CD4-positive, alpha-beta memory T cell (primary cell): ENCODE measurements at regions of chr15 and their contacts with region 1.

Region 1: DNA sequence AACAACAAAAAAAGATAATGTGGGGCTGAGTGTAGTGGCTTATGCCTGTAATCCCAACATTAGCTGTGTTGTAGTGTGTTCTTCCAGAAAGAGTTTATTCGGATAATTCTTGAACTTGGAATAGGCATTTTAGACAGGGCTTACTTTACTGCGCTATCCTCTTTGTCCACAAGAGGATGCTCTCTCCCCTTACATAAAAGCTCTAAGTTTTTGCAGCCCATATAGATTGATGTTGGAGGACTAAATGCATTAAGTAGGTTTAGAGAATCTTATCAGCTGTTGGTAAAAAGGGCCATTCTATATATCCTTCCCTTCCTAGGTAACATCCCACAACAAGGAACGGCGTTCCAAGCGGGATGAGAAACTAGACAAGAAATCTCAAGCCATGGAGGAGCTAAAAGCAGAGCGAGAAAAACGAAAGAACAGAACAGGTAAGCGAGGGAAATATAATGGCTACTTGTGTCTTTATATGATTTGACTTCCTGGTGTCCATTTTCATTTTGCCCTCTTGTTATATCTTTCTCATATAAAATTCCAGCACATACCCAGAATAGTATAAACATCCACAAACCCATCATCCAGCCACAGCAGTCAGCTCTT is 27.8 kb upstream of the ITPKA start:
- DNase-seq: peak in 4 of 5 donors; percentile 37 to 56 (median 44)
- H3K4me3 ChIP-seq: no peak overlapping the region
- H3K4me3 Mint-ChIP-seq: no peak overlapping the region
- H3K27ac ChIP-seq: no peak overlapping the region
- H3K27ac Mint-ChIP-seq: peak overlapping the region in 3 of 7 donors; percentile 24 to 89 (median 49)
- H3K4me1 ChIP-seq: no peaks in the 10 kb centered on the region
- H3K4me1 Mint-ChIP-seq: peaks cover 0 to 7% (median 4%) of the 10 kb centered on the region in 4 donors
- H3K27me3 ChIP-seq: no peaks in the 10 kb centered on the region
- H3K27me3 Mint-ChIP-seq: no peaks in the 10 kb centered on the region

Region 2: DNA sequence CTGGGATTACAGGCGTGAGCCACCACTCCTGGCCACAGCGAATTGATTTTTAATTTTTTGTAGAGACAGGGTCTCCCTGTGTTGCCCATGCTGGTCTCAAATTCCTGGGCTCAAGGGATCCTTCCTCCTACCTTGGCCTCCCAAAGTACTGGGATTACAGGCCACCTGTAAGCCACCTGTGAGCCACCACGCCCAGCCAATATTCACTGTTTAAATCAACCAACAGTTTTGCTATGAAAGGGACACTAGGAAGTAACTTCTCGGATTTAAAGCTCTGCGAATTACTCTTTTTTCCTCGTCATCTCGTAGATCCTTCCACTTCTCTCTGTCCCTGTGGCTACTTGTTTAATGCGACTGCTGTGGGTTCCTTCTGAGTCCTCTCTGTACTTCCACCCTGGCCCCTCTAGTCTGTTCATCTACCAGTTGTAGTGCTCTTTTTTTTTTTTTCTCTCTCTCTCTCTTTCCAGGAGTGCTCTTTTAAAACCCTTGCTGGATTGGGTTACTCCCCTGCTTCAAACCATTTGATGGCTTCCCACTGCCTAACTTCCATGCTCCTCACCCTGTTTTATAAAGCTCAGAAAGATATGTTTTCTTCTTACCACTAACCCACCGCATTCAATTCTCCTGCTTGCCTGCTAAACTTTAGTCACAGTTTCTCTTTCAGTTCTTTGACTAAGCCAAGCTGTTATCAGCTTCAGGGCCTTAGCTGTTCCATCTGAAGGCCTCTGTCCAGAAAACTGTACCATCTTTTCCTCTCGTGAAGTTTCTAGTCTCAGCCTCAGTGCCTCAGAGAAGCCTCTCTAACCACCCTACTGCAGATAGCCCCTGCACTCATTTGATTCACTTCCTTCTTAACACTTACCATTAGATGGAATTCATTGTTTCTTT is 36.7 kb before region 1 on chr15:
- CTCF ChIA-PET with region 1: no interaction called
- POLR2A ChIA-PET with region 1: no interaction called
- intact Hi-C with region 1: no loop called
- DNase-seq: no peak
- H3K4me3 ChIP-seq: no peak overlapping the region
- H3K4me3 Mint-ChIP-seq: peak overlapping the region in 7 of 8 donors; percentile 10 to 66 (median 31)
- H3K27ac ChIP-seq: no peak overlapping the region
- H3K27ac Mint-ChIP-seq: peak overlapping the region; percentile 28 to 90 (median 71)
- H3K4me1 ChIP-seq: peaks cover 12% of the 10 kb centered on the region
- H3K4me1 Mint-ChIP-seq: peaks cover 15 to 32% (median 22%) of the 10 kb centered on the region in 4 donors
- H3K27me3 ChIP-seq: no peaks in the 10 kb centered on the region
- H3K27me3 Mint-ChIP-seq: no peaks in the 10 kb centered on the region

Region 3: GRCh38 chr15:41483115-41483514 is 17.2 kb after region 1 on chr15:
- CTCF ChIA-PET with region 1: interaction called, 11 read pairs
- POLR2A ChIA-PET with region 1: no interaction called
- intact Hi-C with region 1: no loop called
- DNase-seq: peak; percentile 31 to 70 (median 41)
- H3K4me3 ChIP-seq: peak overlapping the region in 1 of 2 donors; percentile 7
- H3K4me3 Mint-ChIP-seq: peak overlapping the region; percentile 60 to 86 (median 76)
- H3K27ac ChIP-seq: peak overlapping the region; percentile 46
- H3K27ac Mint-ChIP-seq: peak overlapping the region; percentile 76 to 93 (median 84)
- H3K4me1 ChIP-seq: peaks cover 20% of the 10 kb centered on the region
- H3K4me1 Mint-ChIP-seq: peaks cover 11 to 26% (median 20%) of the 10 kb centered on the region in 4 donors
- H3K27me3 ChIP-seq: no peaks in the 10 kb centered on the region
- H3K27me3 Mint-ChIP-seq: no peaks in the 10 kb centered on the region

Region 4: DNA sequence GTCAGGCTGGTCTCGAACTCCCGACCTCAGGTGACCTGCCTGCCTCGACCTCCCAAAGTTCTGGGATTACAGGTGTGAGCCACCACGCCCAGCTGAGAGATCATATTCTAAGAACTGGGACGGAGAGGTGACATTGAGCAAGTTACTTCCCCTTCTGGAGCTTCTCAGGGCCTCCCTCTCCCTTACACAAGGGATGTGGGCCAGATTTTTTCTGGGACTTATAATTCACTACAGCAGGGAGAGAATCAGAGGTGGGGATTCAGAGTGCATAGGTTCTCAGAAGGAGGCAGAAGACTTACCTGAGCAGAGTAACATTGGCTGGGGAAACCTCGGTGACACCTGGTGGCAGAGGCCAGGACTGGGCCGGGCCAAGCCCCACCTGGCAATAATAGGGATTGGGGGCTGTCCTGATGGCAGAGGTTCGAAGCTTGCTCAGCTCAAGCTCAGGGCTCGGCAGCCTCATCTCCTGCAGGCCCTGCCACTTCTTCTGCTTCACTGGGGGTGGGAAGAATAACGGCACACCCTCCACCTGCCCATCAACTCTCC is 40.9 kb after region 1 on chr15:
- CTCF ChIA-PET with region 1: interaction called, 23 read pairs
- POLR2A ChIA-PET with region 1: no interaction called
- intact Hi-C with region 1: loop called (anchors 2 kb)
- DNase-seq: no peak
- H3K4me3 ChIP-seq: no peak overlapping the region
- H3K4me3 Mint-ChIP-seq: no peak overlapping the region
- H3K27ac ChIP-seq: no peak overlapping the region
- H3K27ac Mint-ChIP-seq: no peak overlapping the region
- H3K4me1 ChIP-seq: peaks cover 8% of the 10 kb centered on the region
- H3K4me1 Mint-ChIP-seq: peaks cover under 1 to 18% (median 2%) of the 10 kb centered on the region in 4 donors
- H3K27me3 ChIP-seq: no peaks in the 10 kb centered on the region
- H3K27me3 Mint-ChIP-seq: peaks cover 1 to 2% of the 10 kb centered on the region in 2 donors

Region 5: DNA sequence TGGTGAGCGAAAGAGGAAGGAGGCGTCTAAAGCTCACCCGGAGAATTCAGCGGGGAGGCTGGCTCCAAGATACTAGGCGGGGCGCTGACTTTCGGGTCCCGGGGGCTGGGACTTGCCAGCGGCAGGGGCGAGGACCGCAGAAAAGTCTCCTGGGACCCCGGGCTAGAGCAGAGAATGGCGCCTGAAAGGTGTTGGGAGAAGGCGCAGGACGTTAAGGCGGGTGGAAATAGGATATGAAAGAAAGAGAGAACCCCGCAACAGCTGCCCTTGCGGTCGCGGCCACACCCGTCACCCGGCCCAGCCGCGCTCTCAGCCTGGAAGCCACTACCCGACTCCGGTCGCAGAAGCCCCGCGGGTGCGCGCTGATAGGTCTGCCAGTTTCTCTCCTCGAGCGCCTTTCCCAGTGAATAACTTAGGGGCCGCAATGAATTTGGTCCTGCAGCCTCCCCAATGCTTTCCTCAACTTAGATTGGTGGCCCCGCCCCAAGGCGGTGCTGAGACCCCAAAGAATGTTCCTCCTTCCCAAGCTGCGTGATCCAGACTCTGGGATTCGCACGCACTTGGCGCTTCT is 47.1 kb after region 1 on chr15:
- CTCF ChIA-PET with region 1: interaction called, 23 read pairs
- POLR2A ChIA-PET with region 1: no interaction called
- intact Hi-C with region 1: loop called (anchors 2 kb)
- DNase-seq: peak in 2 of 5 donors; percentile 26 to 38
- H3K4me3 ChIP-seq: peak overlapping the region; percentile 52 to 57
- H3K4me3 Mint-ChIP-seq: peak overlapping the region; percentile 81 to 86 (median 83)
- H3K27ac ChIP-seq: no peak overlapping the region
- H3K27ac Mint-ChIP-seq: peak overlapping the region in 6 of 7 donors; percentile 65 to 75 (median 68)
- H3K4me1 ChIP-seq: peaks cover 27% of the 10 kb centered on the region
- H3K4me1 Mint-ChIP-seq: peaks cover 6 to 33% (median 24%) of the 10 kb centered on the region in 4 donors
- H3K27me3 ChIP-seq: peaks cover 17% of the 10 kb centered on the region
- H3K27me3 Mint-ChIP-seq: peaks cover 10 to 13% of the 10 kb centered on the region in 2 donors